Naive thymus-derived CD4-positive, alpha-beta T cell (primary cell): ENCODE measurements at regions of chr3 and their contacts with region 1.

Region 1: GRCh38 chr3:196711838-196712513 is at the starts of genes CEP19 and PIGX:
- DNase-seq: peak; percentile 92 to 97 (median 94)
- ATAC-seq: peak; percentile 92
- H3K4me3 ChIP-seq: peak within 1 kb of the TSS; percentile 79
- H3K4me3 Mint-ChIP-seq: peak within 1 kb of the TSS; percentile 84 to 98 (median 94)
- H3K27ac ChIP-seq: peak within 1 kb of the TSS; percentile 96
- H3K27ac Mint-ChIP-seq: peak within 1 kb of the TSS; percentile 91 to 99 (median 96)
- H3K4me1 ChIP-seq: peaks cover 12 to 14% of the 10 kb centered on the region in 2 donors
- H3K4me1 Mint-ChIP-seq: peaks cover 16 to 42% (median 34%) of the 10 kb centered on the region in 7 donors
- H3K27me3 ChIP-seq: no peaks in the 10 kb centered on the region
- H3K27me3 Mint-ChIP-seq: no peaks in the 10 kb centered on the region
- total RNA-seq, gene CEP19: 0.96 to 8.1 (median 6.9) TPM
- total RNA-seq, gene PIGX: 13.7 to 58.5 (median 17.3) TPM

Region 2: GRCh38 chr3:195909644-195910508 is 802.1 kb before region 1 on chr3:
- CTCF ChIA-PET with region 1: no interaction called
- POLR2A ChIA-PET with region 1: no interaction called
- intact Hi-C with region 1: loop called in 1 of 2 experiments (anchors 5 kb)
- DNase-seq: peak; percentile 82 to 93 (median 87)
- ATAC-seq: peak; percentile 81
- H3K4me3 ChIP-seq: peak overlapping the region; percentile 54
- H3K4me3 Mint-ChIP-seq: peak overlapping the region; percentile 40 to 97 (median 70)
- H3K27ac ChIP-seq: peak overlapping the region; percentile 68
- H3K27ac Mint-ChIP-seq: peak overlapping the region in 6 of 9 donors; percentile 10 to 90 (median 68)
- H3K4me1 ChIP-seq: peaks cover 26 to 27% of the 10 kb centered on the region in 2 donors
- H3K4me1 Mint-ChIP-seq: peaks cover 25 to 39% (median 33%) of the 10 kb centered on the region in 7 donors
- H3K27me3 ChIP-seq: no peaks in the 10 kb centered on the region
- H3K27me3 Mint-ChIP-seq: no peaks in the 10 kb centered on the region

Region 3: GRCh38 chr3:196632046-196632751 is 79.8 kb before region 1 on chr3:
- CTCF ChIA-PET with region 1: no interaction called
- POLR2A ChIA-PET with region 1: interaction called, 3 read pairs
- intact Hi-C with region 1: loop called (anchors 1 kb)
- DNase-seq: peak; percentile 69 to 91 (median 88)
- ATAC-seq: peak; percentile 89
- H3K4me3 ChIP-seq: peak overlapping the region; percentile 48
- H3K4me3 Mint-ChIP-seq: peak overlapping the region; percentile 80 to 96 (median 90)
- H3K27ac ChIP-seq: peak overlapping the region; percentile 78
- H3K27ac Mint-ChIP-seq: peak overlapping the region; percentile 93 to 99 (median 97)
- H3K4me1 ChIP-seq: peaks cover 30 to 31% of the 10 kb centered on the region in 2 donors
- H3K4me1 Mint-ChIP-seq: peaks cover 31 to 74% (median 62%) of the 10 kb centered on the region in 7 donors
- H3K27me3 ChIP-seq: no peaks in the 10 kb centered on the region
- H3K27me3 Mint-ChIP-seq: no peaks in the 10 kb centered on the region

Region 4: GRCh38 chr3:196684548-196685407 is 27.2 kb before region 1 on chr3:
- CTCF ChIA-PET with region 1: no interaction called
- POLR2A ChIA-PET with region 1: interaction called, 4 read pairs
- intact Hi-C with region 1: loop called in 1 of 2 experiments (anchors 1 kb)
- DNase-seq: peak; percentile 29 to 78 (median 62)
- ATAC-seq: peak; percentile 78
- H3K4me3 ChIP-seq: peak overlapping the region; percentile 28
- H3K4me3 Mint-ChIP-seq: peak overlapping the region; percentile 51 to 69 (median 67)
- H3K27ac ChIP-seq: peak overlapping the region; percentile 34
- H3K27ac Mint-ChIP-seq: peak overlapping the region; percentile 38 to 80 (median 71)
- H3K4me1 ChIP-seq: peaks cover 0 to 5% of the 10 kb centered on the region in 2 donors
- H3K4me1 Mint-ChIP-seq: peaks cover 14 to 23% (median 17%) of the 10 kb centered on the region in 7 donors
- H3K27me3 ChIP-seq: no peaks in the 10 kb centered on the region
- H3K27me3 Mint-ChIP-seq: peaks cover 0 to 3% (median 0%) of the 10 kb centered on the region in 5 donors

Region 5: GRCh38 chr3:196867507-196868296 is 155.7 kb after region 1 on chr3 and contains the start of gene SENP5:
- CTCF ChIA-PET with region 1: no interaction called
- POLR2A ChIA-PET with region 1: interaction called, 5 read pairs
- intact Hi-C with region 1: loop called in 1 of 2 experiments (anchors 10 kb)
- DNase-seq: peak; percentile 79 to 92 (median 87)
- ATAC-seq: peak; percentile 99
- H3K4me3 ChIP-seq: peak within 1 kb of the TSS; percentile 86
- H3K4me3 Mint-ChIP-seq: peak within 1 kb of the TSS; percentile 90 to 99 (median 97)
- H3K27ac ChIP-seq: peak within 1 kb of the TSS; percentile 98
- H3K27ac Mint-ChIP-seq: peak within 1 kb of the TSS; percentile 90 to 99 (median 95)
- H3K4me1 ChIP-seq: peaks cover 13 to 16% of the 10 kb centered on the region in 2 donors
- H3K4me1 Mint-ChIP-seq: peaks cover 9 to 42% (median 34%) of the 10 kb centered on the region in 7 donors
- H3K27me3 ChIP-seq: no peaks in the 10 kb centered on the region
- H3K27me3 Mint-ChIP-seq: no peaks in the 10 kb centered on the region
- total RNA-seq, gene SENP5: 40.6 to 59.4 (median 43.1) TPM